ENCODE measurements at regions of chr17 and their contacts with region 1.

Region 1: GRCh38 chr17:59440784-59441441 is 109.5 kb downstream of the YPEL2 start:
- DNase-seq: peak; percentile 61 to 94 (median 80)
- ATAC-seq: peak; percentile 96 to 100 (median 98)
- H3K4me3 ChIP-seq: no peak overlapping the region
- H3K4me3 Mint-ChIP-seq: peak overlapping the region in 2 of 3 donors; percentile 29 to 55
- H3K27ac ChIP-seq: no peak overlapping the region
- H3K27ac Mint-ChIP-seq: peak overlapping the region; percentile 79 to 83
- H3K4me1 ChIP-seq: peaks cover 16 to 19% of the 10 kb centered on the region in 2 experiments
- H3K4me1 Mint-ChIP-seq: peaks cover 21 to 31% (median 30%) of the 10 kb centered on the region in 3 donors
- H3K27me3 ChIP-seq: peaks cover 0 to 7% of the 10 kb centered on the region in 2 experiments
- H3K27me3 Mint-ChIP-seq: peaks cover 0 to 3% of the 10 kb centered on the region in 2 donors

Region 2: DNA sequence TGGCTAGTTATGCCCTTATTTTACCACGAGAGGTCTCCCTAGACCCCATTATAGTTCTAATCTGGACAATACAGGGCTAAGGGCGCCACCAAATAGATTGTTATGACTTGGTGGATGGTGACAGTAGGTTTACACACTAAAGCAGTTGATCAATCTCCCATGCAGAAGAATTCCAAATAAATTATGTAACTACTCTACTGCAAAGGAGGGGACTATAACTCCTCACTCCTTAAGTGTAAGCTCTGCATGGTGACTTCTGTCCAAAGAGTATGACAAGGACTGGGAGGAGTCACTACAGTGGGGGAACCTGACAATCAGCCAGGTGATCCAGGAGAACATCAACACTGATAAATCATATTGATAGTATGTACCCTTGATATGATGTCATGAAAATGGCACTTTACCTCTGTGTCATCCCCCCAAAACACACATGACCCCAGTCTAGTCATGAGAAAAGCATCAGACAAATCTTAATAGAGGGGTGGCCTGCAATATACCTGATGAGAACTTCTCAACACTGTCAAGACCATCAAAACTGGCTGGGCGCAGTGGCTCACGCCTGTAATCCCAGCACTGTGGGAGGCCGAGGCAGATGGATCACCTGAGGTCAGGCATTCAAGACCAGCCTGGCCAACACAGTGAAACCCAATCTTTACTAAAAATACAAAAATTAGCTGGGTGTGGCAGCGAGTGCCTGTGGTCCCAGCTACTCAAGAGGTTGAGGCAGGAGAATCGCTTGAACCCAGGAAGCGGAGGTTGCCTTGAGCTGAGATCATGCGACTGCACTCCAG is 129.6 kb before region 1 on chr17:
- CTCF ChIA-PET with region 1: interaction called, 11 to 79 read pairs
- POLR2A ChIA-PET with region 1: no interaction called
- DNase-seq: peak in 18 of 35 experiments; percentile 5 to 79 (median 24)
- ATAC-seq: peak; percentile 93 to 98 (median 96)
- H3K4me3 ChIP-seq: no peak overlapping the region
- H3K4me3 Mint-ChIP-seq: no peak overlapping the region
- H3K27ac ChIP-seq: no peak overlapping the region
- H3K27ac Mint-ChIP-seq: no peak overlapping the region
- H3K4me1 ChIP-seq: no peaks in the 10 kb centered on the region
- H3K4me1 Mint-ChIP-seq: peaks cover 1 to 6% (median 4%) of the 10 kb centered on the region in 3 donors
- H3K27me3 ChIP-seq: peaks cover 0 to 3% of the 10 kb centered on the region in 2 experiments
- H3K27me3 Mint-ChIP-seq: no peaks in the 10 kb centered on the region